GM12878 (cell line): ENCODE measurements at regions of chr13 and their contacts with region 1.

Region 1: GRCh38 chr13:76903544-76904162 is 17.4 kb upstream of the KCTD12 start:
- DNase-seq: peak; percentile 25
- ATAC-seq: peak; percentile 91
- H3K4me3 ChIP-seq: no peak overlapping the region
- H3K27ac ChIP-seq: no peak overlapping the region
- H3K4me1 ChIP-seq: no peaks in the 10 kb centered on the region
- H3K27me3 ChIP-seq: no peaks in the 10 kb centered on the region; a peak in 1 of 4 replicates
- CTCF ChIP-seq: peak; percentile 95 to 100 (median 98)
- EP300 ChIP-seq: no peak
- POLR2A ChIP-seq: no peak
- RAD21 ChIP-seq: peak; percentile 99

Region 2: DNA sequence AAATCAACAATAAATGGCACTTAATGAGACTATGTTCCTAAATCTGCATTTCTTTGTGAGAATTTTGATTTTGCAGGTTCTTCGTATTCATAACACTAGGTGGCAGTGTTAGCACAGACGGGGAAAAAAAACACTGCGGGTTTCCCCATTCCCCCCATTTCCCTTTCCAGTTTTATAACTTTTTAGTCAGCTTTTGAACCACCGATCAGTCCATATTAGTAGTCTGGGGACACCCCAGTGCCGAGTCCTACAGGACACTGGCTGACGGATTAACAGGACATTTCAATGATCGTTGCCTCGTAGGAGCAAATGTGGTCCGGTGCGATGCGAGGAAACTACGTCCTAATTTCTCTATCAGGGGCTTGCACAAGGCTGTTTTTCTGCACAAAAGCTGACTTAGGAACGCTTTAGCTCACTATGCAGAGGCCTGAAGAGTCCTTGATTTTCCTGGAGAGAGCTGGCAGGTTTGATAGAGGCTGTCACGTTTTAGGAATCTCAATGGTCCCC is 1033.2 kb before region 1 on chr13:
- CTCF ChIA-PET with region 1: interaction called, 33 read pairs
- POLR2A ChIA-PET with region 1: no interaction called
- RAD21 ChIA-PET with region 1: interaction called, 24 read pairs
- SMC1A ChIA-PET with region 1: interaction called, 28 read pairs
- in situ Hi-C with region 1: loop called (anchors 5 kb)
- intact Hi-C with region 1: no loop called
- DNase-seq: no peak
- ATAC-seq: no peak; the same call in 2 of the 3 replicates
- H3K4me3 ChIP-seq: no peak overlapping the region
- H3K27ac ChIP-seq: no peak overlapping the region
- H3K4me1 ChIP-seq: 0 out of 2 replicates have a peak, but pooled peaks cover 3% of the 10 kb centered on the region
- H3K27me3 ChIP-seq: no peaks in the 10 kb centered on the region; a peak in 1 of 4 replicates
- CTCF ChIP-seq: peak; percentile 65 to 76 (median 68)
- EP300 ChIP-seq: no peak
- POLR2A ChIP-seq: no peak
- RAD21 ChIP-seq: peak; percentile 66

Region 3: DNA sequence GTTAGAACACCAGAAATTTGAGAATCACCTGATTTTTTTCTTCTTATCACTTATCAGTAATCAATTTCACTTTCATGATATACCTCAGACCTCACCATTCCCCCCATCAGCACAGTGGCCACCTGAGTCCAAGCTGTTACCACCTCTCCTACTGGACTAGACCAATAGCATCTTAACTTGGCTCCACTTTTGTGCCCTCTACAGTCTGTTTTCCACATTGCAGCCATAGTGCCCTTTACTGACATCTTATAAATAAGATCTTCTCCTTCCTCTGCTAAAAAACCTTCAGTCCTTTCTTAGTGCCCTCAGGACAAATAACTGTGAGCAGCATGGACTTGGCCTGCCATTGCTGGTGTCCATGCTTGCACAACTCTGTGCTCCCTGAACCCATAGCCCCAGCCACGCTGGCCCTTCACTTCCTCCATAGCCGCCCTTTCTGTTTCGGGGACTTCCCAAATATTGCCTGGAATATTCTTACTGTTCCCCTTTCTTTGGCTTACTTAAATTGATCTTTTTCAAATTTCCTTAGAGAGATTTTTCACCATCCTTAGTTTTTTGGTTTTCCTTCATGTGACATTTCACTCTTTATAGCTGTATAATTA is 886.8 kb before region 1 on chr13:
- CTCF ChIA-PET with region 1: interaction called, 7 read pairs
- POLR2A ChIA-PET with region 1: no interaction called
- RAD21 ChIA-PET with region 1: interaction called, 3 read pairs
- SMC1A ChIA-PET with region 1: no interaction called
- in situ Hi-C with region 1: no loop called
- intact Hi-C with region 1: loop called (anchors 2 kb)
- DNase-seq: no peak
- ATAC-seq: peak; percentile 90
- H3K4me3 ChIP-seq: no peak overlapping the region
- H3K27ac ChIP-seq: no peak overlapping the region
- H3K4me1 ChIP-seq: no peaks in the 10 kb centered on the region
- H3K27me3 ChIP-seq: no peaks in the 10 kb centered on the region
- CTCF ChIP-seq: peak; percentile 57 to 72 (median 60); a peak in 5 of 6 replicates
- EP300 ChIP-seq: no peak
- POLR2A ChIP-seq: no peak
- RAD21 ChIP-seq: peak; percentile 69

Region 4: DNA sequence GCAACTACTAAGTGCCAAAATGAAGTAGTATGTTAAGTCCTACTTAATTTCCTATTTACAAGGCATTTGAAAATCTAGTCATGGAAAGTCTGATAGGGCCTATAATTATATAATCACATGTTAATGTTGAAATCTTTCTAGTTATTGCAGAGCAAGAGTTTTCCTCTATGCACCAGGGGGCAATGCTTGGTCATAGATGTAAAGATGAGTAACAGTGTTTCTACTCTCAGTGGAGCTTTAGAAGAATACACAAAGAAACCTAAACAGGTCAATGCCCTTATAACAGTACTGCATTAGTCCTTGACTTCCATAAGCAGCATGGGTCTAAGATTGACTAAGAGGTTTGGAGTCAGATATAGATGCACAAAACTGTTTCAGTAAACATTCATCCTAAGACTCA is 236.1 kb before region 1 on chr13:
- CTCF ChIA-PET with region 1: interaction called, 7 read pairs
- POLR2A ChIA-PET with region 1: no interaction called
- RAD21 ChIA-PET with region 1: no interaction called
- SMC1A ChIA-PET with region 1: interaction called, 5 read pairs
- in situ Hi-C with region 1: loop called (anchors 10 kb)
- intact Hi-C with region 1: loop called (anchors 1 kb)
- DNase-seq: no peak
- ATAC-seq: peak; percentile 46; the same call in 2 of the 3 replicates
- H3K4me3 ChIP-seq: no peak overlapping the region
- H3K27ac ChIP-seq: no peak overlapping the region
- H3K4me1 ChIP-seq: no peaks in the 10 kb centered on the region
- H3K27me3 ChIP-seq: no peaks in the 10 kb centered on the region
- CTCF ChIP-seq: 0 out of 6 replicates have a peak, but pooled peaks of 2 of the 3 experiments have one; percentile 1 to 7
- EP300 ChIP-seq: no peak
- POLR2A ChIP-seq: no peak
- RAD21 ChIP-seq: peak; percentile 63

Region 5: DNA sequence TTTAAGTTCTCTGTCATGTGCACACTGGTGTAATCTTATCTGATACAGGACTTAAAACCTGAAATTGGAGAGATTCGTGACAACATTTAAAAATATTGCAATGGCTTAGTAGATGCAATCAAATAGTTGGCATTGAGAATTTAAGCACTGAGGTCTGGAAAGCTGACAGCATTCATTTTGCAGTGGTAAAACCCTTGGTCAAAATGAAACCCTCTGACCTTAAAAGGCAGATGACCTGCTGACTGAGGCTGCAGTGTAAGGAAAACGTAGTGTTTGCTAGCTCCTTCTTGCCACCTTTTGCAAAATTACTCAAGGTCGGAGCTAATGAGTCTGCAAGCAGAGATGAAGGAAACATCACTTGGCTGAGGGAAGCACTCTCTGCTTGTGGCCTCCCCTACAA is 168.0 kb before region 1 on chr13:
- CTCF ChIA-PET with region 1: no interaction called
- POLR2A ChIA-PET with region 1: no interaction called
- RAD21 ChIA-PET with region 1: no interaction called
- SMC1A ChIA-PET with region 1: no interaction called
- in situ Hi-C with region 1: no loop called
- intact Hi-C with region 1: no loop called
- DNase-seq: peak; percentile 23
- ATAC-seq: peak; percentile 80
- H3K4me3 ChIP-seq: no peak overlapping the region
- H3K27ac ChIP-seq: no peak overlapping the region
- H3K4me1 ChIP-seq: no peaks in the 10 kb centered on the region
- H3K27me3 ChIP-seq: no peaks in the 10 kb centered on the region
- CTCF ChIP-seq: no peak
- EP300 ChIP-seq: no peak
- POLR2A ChIP-seq: no peak
- RAD21 ChIP-seq: no peak

Region 6: GRCh38 chr13:76874479-76874878 is 29.2 kb before region 1 on chr13:
- CTCF ChIA-PET with region 1: interaction called, 12 read pairs
- POLR2A ChIA-PET with region 1: no interaction called
- RAD21 ChIA-PET with region 1: no interaction called
- SMC1A ChIA-PET with region 1: interaction called, 4 read pairs
- in situ Hi-C with region 1: no loop called
- intact Hi-C with region 1: no loop called
- DNase-seq: no peak
- ATAC-seq: peak; percentile 68; the same call in 2 of the 3 replicates
- H3K4me3 ChIP-seq: no peak overlapping the region
- H3K27ac ChIP-seq: no peak overlapping the region
- H3K4me1 ChIP-seq: no peaks in the 10 kb centered on the region
- H3K27me3 ChIP-seq: peaks cover 0 to 3% of the 10 kb centered on the region in 2 experiments; a peak in 2 of 4 replicates
- CTCF ChIP-seq: no peak
- EP300 ChIP-seq: no peak
- POLR2A ChIP-seq: no peak
- RAD21 ChIP-seq: no peak

Region 7: GRCh38 chr13:76917095-76917494 is 13.4 kb after region 1 on chr13:
- CTCF ChIA-PET with region 1: interaction called, 15 read pairs
- POLR2A ChIA-PET with region 1: no interaction called
- RAD21 ChIA-PET with region 1: interaction called, 7 read pairs
- SMC1A ChIA-PET with region 1: interaction called, 6 read pairs
- in situ Hi-C with region 1: no loop called
- intact Hi-C with region 1: no loop called
- DNase-seq: no peak
- ATAC-seq: no peak
- H3K4me3 ChIP-seq: no peak overlapping the region
- H3K27ac ChIP-seq: no peak overlapping the region
- H3K4me1 ChIP-seq: no peaks in the 10 kb centered on the region
- H3K27me3 ChIP-seq: no peaks in the 10 kb centered on the region; a peak in 1 of 4 replicates
- CTCF ChIP-seq: no peak
- EP300 ChIP-seq: no peak
- POLR2A ChIP-seq: no peak
- RAD21 ChIP-seq: no peak